PC-9 (cell line): ENCODE measurements at regions of chr14 and their contacts with region 1.

Region 1: DNA sequence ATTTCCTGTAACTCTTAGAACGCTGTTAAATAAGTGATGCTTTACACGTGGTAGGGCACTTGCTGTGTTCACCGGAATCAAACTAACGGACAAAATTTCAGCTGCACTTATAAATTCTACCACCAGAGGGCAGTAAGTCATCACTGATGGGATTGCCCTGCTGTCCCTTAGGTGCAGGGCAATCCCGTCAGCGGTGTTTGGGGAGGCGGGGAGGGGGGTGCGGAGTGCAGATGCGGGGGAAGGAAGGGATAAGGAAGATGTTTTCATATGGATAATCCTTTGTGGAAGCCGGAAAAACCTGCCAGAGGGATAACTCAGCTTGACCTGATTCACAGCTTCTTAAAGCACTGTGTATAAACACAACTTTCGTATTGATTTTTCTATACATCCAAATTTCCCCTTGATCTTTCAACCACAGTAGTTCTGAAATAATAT is 21.7 kb upstream of the SLC10A1 start:
- DNase-seq: peak; percentile 53 to 66
- H3K4me3 ChIP-seq: no peak overlapping the region
- H3K27ac ChIP-seq: no peak overlapping the region
- H3K4me1 ChIP-seq: no peaks in the 10 kb centered on the region
- H3K27me3 ChIP-seq: peaks cover 43% of the 10 kb centered on the region
- CTCF ChIP-seq: peak; percentile 99

Region 2: DNA sequence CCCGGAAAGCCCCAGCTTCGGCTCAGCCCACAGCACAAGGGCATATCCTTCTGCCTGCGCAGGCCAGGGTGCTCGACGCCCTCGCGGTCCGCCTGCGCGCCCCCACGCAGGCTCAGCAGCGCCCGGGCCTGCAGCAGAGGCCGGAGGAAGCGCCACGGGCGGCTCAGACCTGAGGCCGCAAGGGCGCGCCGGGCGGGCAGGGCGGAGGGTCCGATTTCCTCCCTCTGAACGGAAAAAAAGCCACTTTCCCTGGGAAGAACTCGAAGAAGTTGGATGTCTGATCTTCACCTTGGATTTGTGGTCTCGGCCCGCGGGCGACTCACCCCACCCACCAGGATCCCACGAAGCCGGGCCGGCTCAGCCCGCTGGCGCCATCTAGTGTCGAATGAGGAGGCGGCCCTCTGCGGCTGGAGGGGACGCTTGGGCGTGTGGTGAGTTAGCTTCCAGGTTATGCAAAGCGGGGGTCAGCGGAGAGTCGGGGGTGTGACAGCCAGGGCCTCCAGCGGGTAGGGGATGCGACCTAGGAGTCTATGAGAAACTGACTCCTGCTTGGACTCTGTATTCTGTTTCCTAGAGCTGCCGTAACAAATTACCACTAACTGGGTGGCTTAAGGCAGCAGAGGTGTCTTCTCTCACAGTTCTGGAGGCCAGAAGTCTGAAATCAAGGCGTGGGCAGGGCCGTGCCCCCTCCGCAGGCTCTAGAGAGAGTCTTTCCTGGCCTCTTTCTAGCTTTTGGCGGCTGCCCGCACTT is 91.8 kb before region 1 on chr14:
- CTCF ChIA-PET with region 1: no interaction called
- POLR2A ChIA-PET with region 1: no interaction called
- intact Hi-C with region 1: loop called (anchors 2 kb)
- DNase-seq: peak in 1 of 2 experiments; percentile 82
- H3K4me3 ChIP-seq: peak overlapping the region; percentile 52; the same call in 1 of the 2 replicates
- H3K27ac ChIP-seq: no peak overlapping the region
- H3K4me1 ChIP-seq: 0 out of 2 replicates have a peak, but pooled peaks cover 3% of the 10 kb centered on the region
- H3K27me3 ChIP-seq: no peaks in the 10 kb centered on the region
- CTCF ChIP-seq: peak; percentile 99

Region 3: DNA sequence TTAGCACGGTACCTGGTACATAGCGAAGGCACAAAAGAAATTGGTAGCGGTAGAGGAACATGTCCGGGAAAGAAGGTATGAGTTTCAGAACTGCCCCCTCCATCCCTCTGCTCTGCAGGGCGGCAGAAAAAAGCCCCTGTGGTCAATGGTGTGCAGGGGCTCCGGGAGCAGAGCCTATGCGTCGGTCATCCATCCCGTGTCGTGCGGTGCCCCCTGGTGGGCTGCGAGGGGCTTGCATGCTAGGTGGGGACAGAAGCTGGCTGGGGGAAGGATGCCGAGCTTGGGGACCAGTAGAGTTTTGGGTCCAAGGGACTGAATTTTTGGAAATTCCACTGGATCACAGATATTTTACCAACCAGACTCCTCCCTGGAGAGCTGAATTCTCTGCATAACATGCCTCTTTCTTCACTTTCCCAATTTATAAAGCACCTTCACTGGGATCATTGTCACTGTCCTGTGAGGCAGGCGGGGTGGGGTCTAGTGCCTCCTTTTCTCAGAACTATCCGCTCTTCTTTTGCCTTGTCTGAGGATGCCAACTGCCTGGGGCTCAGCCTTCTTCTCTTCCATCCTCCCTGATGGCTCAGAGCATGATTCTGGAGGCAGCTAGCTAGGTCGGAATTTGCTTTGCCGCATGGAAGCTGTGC is 209.1 kb after region 1 on chr14:
- CTCF ChIA-PET with region 1: interaction called, 4 read pairs
- POLR2A ChIA-PET with region 1: no interaction called
- intact Hi-C with region 1: loop called (anchors 2 kb)
- DNase-seq: peak in 1 of 2 experiments; percentile 59
- H3K4me3 ChIP-seq: no peak overlapping the region
- H3K27ac ChIP-seq: no peak overlapping the region
- H3K4me1 ChIP-seq: no peaks in the 10 kb centered on the region
- H3K27me3 ChIP-seq: peaks cover 9% of the 10 kb centered on the region; the same call in 1 of the 2 replicates
- CTCF ChIP-seq: peak; percentile 96

Region 4: GRCh38 chr14:70052990-70053389 is 234.2 kb after region 1 on chr14:
- CTCF ChIA-PET with region 1: interaction called, 12 read pairs
- POLR2A ChIA-PET with region 1: no interaction called
- intact Hi-C with region 1: no loop called
- DNase-seq: peak in 1 of 2 experiments; percentile 6
- H3K4me3 ChIP-seq: no peak overlapping the region
- H3K27ac ChIP-seq: no peak overlapping the region
- H3K4me1 ChIP-seq: no peaks in the 10 kb centered on the region
- H3K27me3 ChIP-seq: peaks cover 30% of the 10 kb centered on the region
- CTCF ChIP-seq: no peak

Region 5: DNA sequence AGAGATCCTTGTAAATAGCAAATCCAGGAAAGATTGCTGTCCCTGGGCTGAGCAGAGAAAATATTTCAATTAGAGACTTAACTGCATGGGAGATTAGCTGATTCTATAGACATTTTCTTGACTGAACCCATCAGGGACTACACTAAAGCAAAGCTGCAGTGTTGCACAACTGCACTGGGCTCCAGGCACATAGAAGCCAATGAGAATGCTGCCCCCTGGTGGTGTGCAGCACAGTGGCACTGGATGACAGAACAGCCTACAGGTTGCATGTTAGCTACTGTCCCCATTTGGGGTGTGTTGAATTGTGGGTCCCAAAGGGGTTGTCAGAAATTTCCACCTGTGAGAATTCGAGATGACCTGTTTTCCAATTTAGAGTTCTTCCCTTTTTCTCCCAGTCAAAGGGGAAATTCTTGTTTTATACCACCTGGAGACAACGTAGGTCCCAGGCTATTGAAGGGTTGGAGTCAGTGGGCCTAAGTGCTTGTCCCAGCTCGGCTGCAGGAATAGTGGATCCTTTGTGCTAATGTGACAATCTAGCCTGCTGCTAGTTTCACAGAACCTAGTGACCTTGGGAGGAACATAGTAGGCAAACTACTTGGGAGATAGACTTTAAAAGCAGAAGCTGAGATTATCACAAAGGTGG is 255.3 kb after region 1 on chr14:
- CTCF ChIA-PET with region 1: no interaction called
- POLR2A ChIA-PET with region 1: no interaction called
- intact Hi-C with region 1: loop called (anchors 1 kb)
- DNase-seq: peak; percentile 57 to 59
- H3K4me3 ChIP-seq: no peak overlapping the region
- H3K27ac ChIP-seq: no peak overlapping the region
- H3K4me1 ChIP-seq: no peaks in the 10 kb centered on the region
- H3K27me3 ChIP-seq: peaks cover 44% of the 10 kb centered on the region
- CTCF ChIP-seq: peak; percentile 93

Region 6: GRCh38 chr14:70955543-70956480 is 1137.0 kb after region 1 on chr14:
- CTCF ChIA-PET with region 1: no interaction called
- POLR2A ChIA-PET with region 1: no interaction called
- intact Hi-C with region 1: loop called (anchors 5 kb)
- DNase-seq: peak in 1 of 2 experiments; percentile 43
- H3K4me3 ChIP-seq: no peak overlapping the region
- H3K27ac ChIP-seq: no peak overlapping the region
- H3K4me1 ChIP-seq: no peaks in the 10 kb centered on the region
- H3K27me3 ChIP-seq: no peaks in the 10 kb centered on the region
- CTCF ChIP-seq: peak; percentile 66

Region 7: DNA sequence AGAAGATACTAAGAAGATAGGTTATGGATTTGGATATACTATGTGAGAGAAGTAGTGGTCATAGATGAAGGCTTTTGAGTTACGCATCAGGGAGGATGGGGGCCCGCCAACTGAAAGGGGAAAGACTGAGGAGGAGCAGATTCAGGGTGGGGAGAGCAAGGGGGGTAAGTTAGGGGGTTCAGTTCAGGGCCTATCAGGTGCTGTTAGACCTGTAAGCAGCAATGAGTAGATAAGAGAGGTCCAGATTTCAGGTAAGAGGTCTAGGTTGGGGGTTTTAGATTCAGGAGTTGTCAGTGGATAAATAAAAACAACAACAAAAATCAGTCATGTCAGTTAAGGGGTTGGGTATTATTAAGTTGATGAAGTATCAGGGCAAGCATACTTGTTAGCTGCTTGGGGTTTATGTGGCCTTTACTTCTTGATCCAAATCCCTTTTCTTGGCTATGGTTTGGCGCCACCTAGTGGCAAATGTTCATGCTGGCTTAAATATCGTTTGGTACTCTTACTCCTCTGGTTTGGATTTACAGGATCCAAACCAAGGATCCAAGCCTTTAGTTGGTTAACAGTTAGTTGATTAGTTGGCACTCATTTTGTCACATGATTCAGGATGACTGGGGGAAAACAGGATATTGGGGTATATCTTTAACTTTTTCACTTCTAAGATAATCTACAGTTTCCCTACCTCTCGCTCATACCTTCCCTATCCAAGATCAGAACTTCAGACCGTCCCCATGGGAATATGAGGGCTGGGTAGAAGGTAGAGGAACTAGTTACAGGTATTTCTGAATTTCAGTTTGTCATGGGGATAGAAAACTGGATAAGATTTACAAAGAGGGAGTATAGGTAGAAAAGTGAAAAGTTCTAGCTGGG is 1153.6 kb after region 1 on chr14:
- CTCF ChIA-PET with region 1: no interaction called
- POLR2A ChIA-PET with region 1: no interaction called
- intact Hi-C with region 1: loop called (anchors 2 kb)
- DNase-seq: peak; percentile 61 to 71
- H3K4me3 ChIP-seq: no peak overlapping the region
- H3K27ac ChIP-seq: no peak overlapping the region
- H3K4me1 ChIP-seq: no peaks in the 10 kb centered on the region
- H3K27me3 ChIP-seq: no peaks in the 10 kb centered on the region
- CTCF ChIP-seq: peak; percentile 97